A673 (cell line): ENCODE measurements at regions of chr22 and their contacts with region 1.

Region 1: DNA sequence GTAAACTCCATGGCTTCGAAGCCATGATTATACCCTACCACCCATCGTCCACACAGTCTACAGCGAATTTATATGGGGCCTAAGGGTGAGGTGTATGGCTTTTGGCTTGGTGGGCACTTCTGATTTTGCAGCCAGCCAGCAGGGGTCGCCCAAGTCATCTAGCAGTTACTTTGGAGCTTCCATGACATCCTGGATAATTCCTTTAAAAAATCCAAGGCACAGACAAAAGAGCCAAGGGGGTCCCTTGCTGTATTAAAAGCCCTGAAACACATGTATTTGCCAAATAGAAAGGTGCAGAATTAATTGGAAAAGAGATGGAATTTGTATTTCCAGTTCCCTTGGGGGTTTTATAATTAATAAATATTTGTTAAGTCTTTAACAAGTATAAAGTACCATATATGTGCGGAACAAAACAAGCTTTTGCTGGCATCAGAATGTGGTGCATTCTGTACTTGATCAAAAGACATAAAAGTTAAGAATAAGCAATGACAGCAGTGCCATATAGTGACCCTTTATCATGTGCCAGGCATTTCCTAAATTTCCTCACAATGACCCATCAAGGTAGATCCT is 132.8 kb upstream of the PITPNB start:
- DNase-seq: peak; percentile 86
- H3K4me3 ChIP-seq: peak overlapping the region; percentile 5
- H3K27ac ChIP-seq: no peak overlapping the region
- H3K4me1 ChIP-seq: peaks cover 16% of the 10 kb centered on the region
- H3K27me3 ChIP-seq: no peaks in the 10 kb centered on the region
- CTCF ChIP-seq: peak; percentile 95

Region 2: GRCh38 chr22:28329186-28330073 is 277.6 kb after region 1 on chr22:
- CTCF ChIA-PET with region 1: no interaction called
- POLR2A ChIA-PET with region 1: no interaction called
- intact Hi-C with region 1: loop called (anchors 10 kb)
- DNase-seq: peak; percentile 54
- H3K4me3 ChIP-seq: no peak overlapping the region
- H3K27ac ChIP-seq: no peak overlapping the region
- H3K4me1 ChIP-seq: peaks cover 45% of the 10 kb centered on the region
- H3K27me3 ChIP-seq: no peaks in the 10 kb centered on the region
- CTCF ChIP-seq: no peak

Region 3: DNA sequence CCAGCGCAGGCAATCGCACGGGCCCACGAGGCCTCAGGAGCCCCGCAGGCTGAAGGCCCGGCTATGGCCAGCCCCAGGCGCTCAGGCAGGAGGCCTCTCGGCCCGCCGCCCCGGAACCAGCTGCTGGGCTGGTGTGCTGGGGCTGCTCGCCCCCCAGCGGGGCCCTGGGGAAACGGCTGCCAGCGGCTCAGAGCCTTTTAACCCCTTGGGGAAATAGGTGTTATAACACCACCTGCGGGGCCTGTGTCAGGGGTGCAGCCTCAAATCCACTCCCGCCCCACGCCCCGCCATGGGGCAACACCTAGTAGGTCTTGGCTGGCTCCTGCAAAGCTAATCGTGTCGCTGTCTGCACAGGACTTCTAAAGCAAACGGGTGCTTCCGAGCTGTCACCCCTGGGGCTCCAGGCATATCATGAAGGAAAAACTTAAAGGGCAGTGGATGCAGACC is 390.4 kb after region 1 on chr22:
- CTCF ChIA-PET with region 1: no interaction called
- POLR2A ChIA-PET with region 1: no interaction called
- intact Hi-C with region 1: loop called (anchors 2 kb)
- DNase-seq: peak; percentile 74
- H3K4me3 ChIP-seq: peak overlapping the region; percentile 49
- H3K27ac ChIP-seq: no peak overlapping the region
- H3K4me1 ChIP-seq: peaks cover 57% of the 10 kb centered on the region
- H3K27me3 ChIP-seq: no peaks in the 10 kb centered on the region
- CTCF ChIP-seq: peak; percentile 73

Region 4: DNA sequence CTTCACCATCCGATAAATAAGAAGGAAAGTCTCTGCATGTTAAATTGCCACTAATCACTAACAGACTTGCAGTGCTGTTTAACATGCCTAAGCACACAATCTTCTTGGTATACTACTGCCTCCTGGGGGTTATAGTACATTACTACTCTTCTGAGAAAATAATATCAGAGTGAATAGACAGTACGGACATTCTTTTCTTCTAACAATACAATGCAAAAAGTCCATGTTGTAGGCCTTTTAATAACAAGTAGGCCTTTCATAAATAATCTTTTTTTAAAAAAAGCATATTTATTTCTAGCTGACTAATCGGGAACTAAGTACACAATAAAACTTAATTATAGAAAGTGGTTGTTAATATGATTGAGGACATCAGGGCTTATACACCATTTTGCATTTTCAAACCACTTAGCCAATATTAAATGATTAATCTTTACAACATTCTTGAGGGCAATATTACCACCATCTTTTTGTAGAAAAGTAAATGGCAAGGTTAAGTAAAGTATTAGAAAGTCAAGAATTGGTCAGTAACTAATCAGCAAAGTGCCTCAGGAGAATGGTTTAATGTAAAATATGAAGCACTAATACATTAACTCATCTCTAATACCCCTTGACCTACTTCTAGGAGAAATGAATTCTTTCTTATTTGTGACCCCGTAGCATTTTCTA is 543.1 kb after region 1 on chr22:
- CTCF ChIA-PET with region 1: interaction called, 6 read pairs
- POLR2A ChIA-PET with region 1: no interaction called
- intact Hi-C with region 1: loop called (anchors 1 kb)
- DNase-seq: peak; percentile 86
- H3K4me3 ChIP-seq: no peak overlapping the region
- H3K27ac ChIP-seq: no peak overlapping the region
- H3K4me1 ChIP-seq: peaks cover 18% of the 10 kb centered on the region
- H3K27me3 ChIP-seq: no peaks in the 10 kb centered on the region
- CTCF ChIP-seq: peak; percentile 83